ENCODE measurements at regions of chr19 and their contacts with region 1.

Region 1: GRCh38 chr19:14517840-14518505 is at the start of gene DNAJB1:
- DNase-seq: peak in 7 of 10 donors; percentile 45 to 80 (median 59)
- ATAC-seq: peak; percentile 38 to 56
- H3K4me3 Mint-ChIP-seq: peak within 1 kb of the TSS; percentile 93 to 99 (median 96)
- H3K27ac Mint-ChIP-seq: peak within 1 kb of the TSS; percentile 91 to 99 (median 99)
- H3K4me1 Mint-ChIP-seq: peaks cover 45 to 80% (median 75%) of the 10 kb centered on the region in 4 donors
- H3K27me3 Mint-ChIP-seq: no peaks in the 10 kb centered on the region
- polyA plus RNA-seq, gene DNAJB1: 205 to 348 (median 344) TPM

Region 2: DNA sequence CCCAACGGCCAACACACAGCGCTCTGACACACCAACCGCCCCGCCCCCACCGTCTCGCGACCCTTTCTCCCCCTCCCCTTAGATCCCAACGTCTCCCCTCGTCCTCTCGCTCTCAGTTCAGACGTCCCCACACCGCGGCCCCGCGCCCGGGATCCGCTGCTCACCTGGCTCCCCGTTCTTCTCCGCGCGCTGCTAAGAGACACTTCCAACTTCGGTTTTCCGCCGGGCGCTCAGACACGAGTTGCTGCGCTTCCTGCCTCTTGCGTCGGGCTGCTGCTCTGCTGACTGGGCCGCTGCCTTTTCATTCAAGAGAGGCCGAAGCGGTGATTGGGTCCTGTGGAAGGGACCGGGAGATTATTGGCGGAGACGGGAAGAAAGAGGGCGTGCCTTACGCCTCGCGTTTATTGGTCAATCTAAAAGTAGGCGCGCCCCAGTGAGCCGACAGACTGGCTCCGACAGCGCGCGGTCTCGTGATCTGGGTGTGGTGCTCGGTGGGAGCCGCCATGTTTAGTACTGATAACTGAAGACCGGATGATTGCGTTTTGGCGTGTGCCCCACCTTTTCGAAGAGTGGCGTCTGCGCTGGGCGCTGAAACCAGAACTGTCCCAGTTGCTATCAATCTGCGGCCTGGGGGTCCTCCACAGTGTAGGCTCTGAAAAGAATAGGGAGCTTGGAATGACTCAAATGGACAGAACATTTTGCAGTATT is 98.7 kb before region 1 on chr19 and contains the start of gene DDX39A:
- POLR2A ChIA-PET with region 1: interaction called, 15 read pairs
- DNase-seq: peak; percentile 85 to 99 (median 98)
- ATAC-seq: peak; percentile 87 to 88
- H3K4me3 Mint-ChIP-seq: peak within 1 kb of the TSS; percentile 91 to 100 (median 97)
- H3K27ac Mint-ChIP-seq: peak within 1 kb of the TSS; percentile 95 to 100 (median 98)
- H3K4me1 Mint-ChIP-seq: peaks cover 21 to 41% (median 40%) of the 10 kb centered on the region in 4 donors
- H3K27me3 Mint-ChIP-seq: no peaks in the 10 kb centered on the region
- polyA plus RNA-seq, gene DDX39A: 96.0 to 136 (median 106) TPM

Region 3: DNA sequence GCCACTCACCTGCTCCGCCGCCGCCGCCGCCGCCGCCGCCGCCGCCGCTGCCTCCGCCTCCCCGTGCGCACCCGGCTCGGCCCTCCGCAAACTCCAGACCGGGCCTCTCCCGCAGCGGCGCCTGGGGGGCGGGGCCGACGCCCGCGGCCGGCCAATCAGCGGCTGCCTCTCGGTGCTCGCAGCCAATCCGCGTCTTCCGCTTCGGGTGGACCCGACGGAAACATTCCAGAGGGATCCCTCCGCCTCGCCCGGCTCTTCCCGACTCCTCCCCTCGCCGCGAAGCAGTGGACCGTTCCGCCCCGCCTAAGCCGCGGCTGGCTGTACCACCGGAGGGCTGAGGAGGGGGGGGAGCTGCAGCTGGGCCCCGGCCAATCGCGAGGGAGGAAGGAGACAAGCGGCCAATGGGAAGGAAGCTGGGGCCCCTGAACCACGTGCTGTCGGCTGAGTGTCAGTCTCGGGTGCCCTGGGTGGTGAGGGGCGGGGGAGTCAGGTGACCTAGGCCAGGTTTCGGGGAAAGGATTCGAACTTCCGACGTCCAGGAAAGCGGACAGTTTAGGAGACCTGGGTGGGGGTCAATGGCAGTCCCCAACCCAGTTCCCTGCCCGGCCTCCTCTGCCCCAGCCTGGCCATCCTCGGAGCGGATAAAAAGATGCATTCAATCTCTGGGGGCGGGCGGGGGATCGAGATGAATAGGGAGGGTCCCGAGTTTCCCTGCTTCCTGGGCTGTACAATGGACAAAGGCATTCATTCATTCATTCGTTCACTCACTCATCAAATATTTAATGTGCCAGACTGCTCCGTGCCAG is 21.7 kb before region 1 on chr19 and contains the start of gene GIPC1:
- POLR2A ChIA-PET with region 1: interaction called, 89 read pairs
- DNase-seq: peak; percentile 66 to 94 (median 81)
- ATAC-seq: peak; percentile 91 to 92
- H3K4me3 Mint-ChIP-seq: peak within 1 kb of the TSS; percentile 78 to 91 (median 86)
- H3K27ac Mint-ChIP-seq: peak within 1 kb of the TSS; percentile 57 to 91 (median 88)
- H3K4me1 Mint-ChIP-seq: peaks cover 13 to 34% (median 25%) of the 10 kb centered on the region in 4 donors
- H3K27me3 Mint-ChIP-seq: no peaks in the 10 kb centered on the region
- polyA plus RNA-seq, gene GIPC1: 32.2 to 35.0 (median 33.5) TPM

Region 4: DNA sequence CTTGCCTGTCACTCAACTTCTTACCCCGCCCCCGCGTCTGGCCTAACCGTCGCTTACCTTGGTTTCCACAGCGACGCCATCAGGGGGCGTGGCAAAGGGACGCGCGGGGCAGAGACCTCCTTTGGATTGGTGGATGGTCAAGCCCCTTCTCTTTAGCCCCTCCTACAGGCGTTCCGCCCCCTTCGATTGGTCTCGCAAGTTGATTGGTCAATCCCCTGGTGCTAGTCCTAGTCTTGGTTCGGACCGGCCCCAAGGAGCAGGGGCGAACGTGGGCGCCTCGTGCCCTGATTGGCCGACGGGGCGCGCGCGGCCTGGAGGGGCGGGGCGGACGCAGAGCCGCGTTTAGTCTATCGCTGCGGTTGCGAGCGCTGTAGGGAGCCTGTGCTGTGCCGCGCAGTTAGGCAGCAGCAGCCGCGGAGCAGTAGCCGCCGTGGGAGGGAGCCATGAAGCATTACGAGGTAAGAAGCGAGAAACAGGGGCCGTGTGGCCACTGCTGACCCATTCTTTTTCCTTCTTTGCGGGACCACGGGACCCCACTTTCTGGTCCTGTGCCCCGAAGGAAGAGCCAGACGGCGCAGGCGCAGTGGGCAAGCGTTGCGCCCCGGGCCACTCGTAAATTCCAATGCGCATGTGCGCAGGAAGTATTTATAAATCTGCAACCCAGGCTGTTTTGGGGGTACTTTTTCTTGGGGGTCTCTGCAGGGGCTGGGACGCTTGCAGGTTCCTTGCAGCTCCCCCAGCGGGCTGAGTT is 11.5 kb after region 1 on chr19 and contains the start of gene TECR:
- POLR2A ChIA-PET with region 1: interaction called, 207 read pairs
- DNase-seq: peak; percentile 98 to 100 (median 100)
- ATAC-seq: peak; percentile 90 to 91
- H3K4me3 Mint-ChIP-seq: peak within 1 kb of the TSS; percentile 91 to 99 (median 96)
- H3K27ac Mint-ChIP-seq: peak within 1 kb of the TSS; percentile 95 to 100 (median 100)
- H3K4me1 Mint-ChIP-seq: peaks cover 12 to 67% (median 40%) of the 10 kb centered on the region in 4 donors
- H3K27me3 Mint-ChIP-seq: peaks cover 0 to 2% (median 0%) of the 10 kb centered on the region in 5 donors
- polyA plus RNA-seq, gene TECR: 193 to 300 (median 261) TPM

Region 5: DNA sequence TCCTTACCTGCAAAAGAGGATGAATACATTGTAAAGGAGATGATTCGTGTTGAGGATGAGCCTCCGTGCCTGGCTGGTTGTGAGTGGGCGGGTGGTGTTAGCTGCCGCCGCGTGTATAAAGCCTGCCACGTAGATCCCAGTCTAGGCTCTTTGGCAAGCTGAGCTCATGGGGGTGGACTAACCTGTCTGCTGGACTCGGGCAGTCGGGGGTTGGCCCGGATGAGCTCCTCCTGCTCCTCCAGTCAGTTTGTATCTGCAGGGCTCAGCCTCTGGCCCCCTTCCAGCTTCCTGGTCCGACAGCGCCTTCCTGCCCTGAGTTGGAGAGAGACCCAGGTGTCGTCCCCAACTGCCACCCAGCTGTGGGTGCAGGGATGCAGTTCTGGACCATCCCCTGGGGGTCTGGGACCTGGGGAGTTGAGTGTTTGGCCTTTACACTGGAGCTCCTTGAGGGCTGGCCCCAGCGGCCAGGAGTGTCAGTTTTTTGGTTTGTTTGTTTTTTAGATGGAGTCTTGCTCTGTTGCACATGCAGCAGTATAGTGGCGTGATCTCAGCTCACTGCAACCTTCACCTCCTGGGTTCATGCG is 32.3 kb after region 1 on chr19:
- POLR2A ChIA-PET with region 1: interaction called, 36 read pairs
- DNase-seq: no peak
- ATAC-seq: no peak
- H3K4me3 Mint-ChIP-seq: peak overlapping the region in 2 of 10 donors; percentile 62 to 64
- H3K27ac Mint-ChIP-seq: peak overlapping the region in 9 of 10 donors; percentile 83 to 95 (median 94)
- H3K4me1 Mint-ChIP-seq: peaks cover 18 to 64% (median 49%) of the 10 kb centered on the region in 4 donors
- H3K27me3 Mint-ChIP-seq: no peaks in the 10 kb centered on the region

Region 6: GRCh38 chr19:14748601-14749000 is 230.6 kb after region 1 on chr19:
- POLR2A ChIA-PET with region 1: no interaction called
- DNase-seq: no peak
- ATAC-seq: no peak
- H3K4me3 Mint-ChIP-seq: no peak overlapping the region
- H3K27ac Mint-ChIP-seq: no peak overlapping the region
- H3K4me1 Mint-ChIP-seq: no peaks in the 10 kb centered on the region
- H3K27me3 Mint-ChIP-seq: no peaks in the 10 kb centered on the region